ENCODE measurements at regions of chr20 and their contacts with region 1.

Region 1: GRCh38 chr20:45011108-45011526 is 44.8 kb downstream of the STK4 start:
- DNase-seq: peak; percentile 55
- H3K4me3 Mint-ChIP-seq: no peak overlapping the region
- H3K27ac Mint-ChIP-seq: no peak overlapping the region
- H3K4me1 Mint-ChIP-seq: peaks cover 62% of the 10 kb centered on the region
- H3K27me3 Mint-ChIP-seq: no peaks in the 10 kb centered on the region

Region 2: DNA sequence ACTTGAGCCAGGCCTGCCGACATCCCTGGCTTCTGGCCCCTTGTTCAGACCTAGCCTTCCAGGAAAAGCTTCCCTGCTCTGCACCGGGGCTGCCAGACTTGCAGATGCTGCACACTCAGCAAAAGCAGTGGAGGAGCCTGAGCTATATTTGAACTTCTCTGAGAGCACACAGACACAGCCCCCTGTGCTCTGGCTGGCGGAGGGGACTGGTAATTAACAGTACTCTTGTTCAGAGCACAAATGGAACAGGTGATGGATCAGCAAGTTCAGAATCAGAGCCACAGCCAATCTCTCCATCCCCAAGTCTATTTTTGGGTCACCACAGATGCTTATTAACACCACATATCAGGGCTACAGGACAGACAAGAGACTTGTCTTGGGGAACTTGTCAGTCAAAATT is 173.2 kb before region 1 on chr20:
- CTCF ChIA-PET with region 1: no interaction called
- POLR2A ChIA-PET with region 1: no interaction called
- intact Hi-C with region 1: no loop called
- DNase-seq: no peak
- H3K4me3 Mint-ChIP-seq: no peak overlapping the region
- H3K27ac Mint-ChIP-seq: no peak overlapping the region
- H3K4me1 Mint-ChIP-seq: peaks cover 6% of the 10 kb centered on the region
- H3K27me3 Mint-ChIP-seq: peaks cover 20% of the 10 kb centered on the region

Region 3: DNA sequence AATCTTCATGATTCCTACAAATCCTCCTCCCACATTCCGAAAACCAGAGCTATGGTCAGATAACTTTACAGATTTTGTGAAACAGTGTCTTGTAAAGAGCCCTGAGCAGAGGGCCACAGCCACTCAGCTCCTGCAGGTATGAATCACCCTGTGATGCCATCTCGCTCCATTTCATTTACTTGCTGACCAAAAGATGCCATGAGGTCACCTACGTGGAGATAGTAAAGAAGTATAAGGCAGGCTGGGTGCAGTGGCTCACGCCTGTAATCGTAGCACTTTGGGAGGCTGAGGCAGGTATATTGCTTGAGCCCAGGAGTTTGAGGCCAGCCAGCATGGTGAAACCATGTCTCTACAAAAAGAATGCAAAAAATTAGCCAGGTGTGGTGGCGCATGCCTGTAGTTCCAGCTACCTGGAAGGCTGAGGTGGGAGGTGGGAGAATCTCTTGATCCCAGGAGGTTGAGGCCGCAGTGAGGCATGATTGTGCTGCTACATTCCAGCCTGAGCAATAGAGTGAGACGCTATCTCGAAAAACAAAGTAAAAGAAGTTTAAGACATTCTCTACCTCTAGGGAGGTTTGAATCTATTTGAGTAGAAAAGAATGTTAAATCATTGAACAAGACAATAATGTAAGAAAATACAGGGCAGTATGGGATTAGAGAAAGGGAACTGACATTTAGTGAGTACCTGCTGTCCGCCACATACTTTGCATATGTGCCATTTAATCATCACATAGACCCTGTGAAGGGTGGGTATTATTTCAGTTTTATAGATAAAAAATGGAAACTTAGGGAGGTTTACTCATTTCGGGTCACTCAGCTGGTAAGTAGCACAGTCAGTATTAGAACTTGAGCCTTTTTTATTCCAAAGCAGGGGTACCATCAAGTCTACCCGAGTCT is 13.7 kb before region 1 on chr20:
- CTCF ChIA-PET with region 1: interaction called, 29 read pairs
- POLR2A ChIA-PET with region 1: no interaction called
- intact Hi-C with region 1: no loop called
- DNase-seq: no peak
- H3K4me3 Mint-ChIP-seq: no peak overlapping the region
- H3K27ac Mint-ChIP-seq: peak overlapping the region; percentile 69
- H3K4me1 Mint-ChIP-seq: peaks cover 63% of the 10 kb centered on the region
- H3K27me3 Mint-ChIP-seq: no peaks in the 10 kb centered on the region

Region 4: DNA sequence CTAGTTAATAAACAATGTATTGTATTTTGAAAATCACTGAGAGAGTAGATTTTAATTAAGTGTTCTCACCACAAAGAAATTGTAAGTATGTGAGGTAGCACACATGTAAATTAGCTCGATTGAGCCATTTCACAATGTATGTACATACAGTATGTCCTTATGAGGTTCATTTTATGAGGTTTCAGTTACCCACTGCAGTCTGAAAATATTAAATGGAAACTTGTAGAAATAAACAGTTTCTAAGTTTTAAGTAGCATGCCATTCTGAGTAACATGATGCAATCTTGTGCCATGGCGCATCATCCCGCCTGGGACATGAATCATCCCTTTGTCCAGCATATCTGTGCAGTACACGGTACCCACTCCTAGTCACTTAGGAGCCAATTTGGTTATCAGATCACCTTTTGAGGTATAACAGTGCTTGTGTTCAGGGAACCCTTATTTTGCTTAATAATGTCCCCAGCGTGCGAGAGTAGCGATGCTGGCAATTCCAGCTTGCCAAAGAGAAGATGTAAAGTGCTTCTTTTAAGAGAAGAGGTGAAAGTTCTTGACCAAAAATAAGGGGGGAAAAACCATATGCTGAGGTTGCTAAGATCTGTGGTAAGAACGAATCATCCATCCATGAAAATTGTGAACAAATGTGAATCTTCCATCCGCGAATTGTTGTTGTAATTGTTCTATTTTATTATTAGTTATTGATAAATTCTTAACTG is 25.1 kb after region 1 on chr20:
- CTCF ChIA-PET with region 1: interaction called, 12 read pairs
- POLR2A ChIA-PET with region 1: no interaction called
- intact Hi-C with region 1: no loop called
- DNase-seq: peak; percentile 83
- H3K4me3 Mint-ChIP-seq: no peak overlapping the region
- H3K27ac Mint-ChIP-seq: peak overlapping the region; percentile 92
- H3K4me1 Mint-ChIP-seq: peaks cover 78% of the 10 kb centered on the region
- H3K27me3 Mint-ChIP-seq: no peaks in the 10 kb centered on the region